GM12878 (cell line): ENCODE measurements at regions of chr6 and their contacts with region 1.

Region 1: GRCh38 chr6:43608310-43608763 is 20.7 kb downstream of the GTPBP2 start:
- DNase-seq: peak; percentile 17
- ATAC-seq: peak; percentile 74
- H3K4me3 ChIP-seq: no peak overlapping the region
- H3K27ac ChIP-seq: no peak overlapping the region
- H3K4me1 ChIP-seq: no peaks in the 10 kb centered on the region
- H3K27me3 ChIP-seq: no peaks in the 10 kb centered on the region
- CTCF ChIP-seq: peak; percentile 74 to 84 (median 78)
- EP300 ChIP-seq: no peak
- POLR2A ChIP-seq: no peak
- RAD21 ChIP-seq: peak; percentile 61

Region 2: DNA sequence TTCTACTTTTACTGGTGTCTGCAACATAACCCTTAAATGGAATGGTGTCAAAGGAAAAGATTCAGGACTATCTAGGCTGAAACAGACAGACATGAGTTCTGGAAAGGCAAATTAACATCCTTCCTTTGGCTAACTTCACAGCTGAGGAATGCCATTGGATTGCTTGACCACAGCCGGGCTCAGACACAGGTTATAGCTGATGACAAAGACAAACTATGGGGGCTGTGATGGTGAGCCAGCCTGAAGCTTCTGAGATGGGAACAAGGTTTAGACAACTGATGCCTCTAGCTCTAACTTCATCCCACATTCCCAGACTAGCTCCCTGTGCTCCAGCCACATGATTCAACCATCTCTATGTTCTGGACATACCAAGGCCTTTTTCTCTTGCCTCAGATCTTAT is 76.1 kb before region 1 on chr6:
- CTCF ChIA-PET with region 1: interaction called, 10 read pairs
- POLR2A ChIA-PET with region 1: interaction called, 5 read pairs
- RAD21 ChIA-PET with region 1: no interaction called
- SMC1A ChIA-PET with region 1: no interaction called
- in situ Hi-C with region 1: no loop called
- intact Hi-C with region 1: no loop called
- DNase-seq: no peak
- ATAC-seq: no peak
- H3K4me3 ChIP-seq: no peak overlapping the region
- H3K27ac ChIP-seq: no peak overlapping the region
- H3K4me1 ChIP-seq: no peaks in the 10 kb centered on the region
- H3K27me3 ChIP-seq: no peaks in the 10 kb centered on the region
- CTCF ChIP-seq: no peak
- EP300 ChIP-seq: no peak
- POLR2A ChIP-seq: no peak
- RAD21 ChIP-seq: no peak

Region 3: GRCh38 chr6:43588194-43588593 is 20.1 kb before region 1 on chr6:
- CTCF ChIA-PET with region 1: interaction called, 15 read pairs
- POLR2A ChIA-PET with region 1: no interaction called
- RAD21 ChIA-PET with region 1: no interaction called
- SMC1A ChIA-PET with region 1: interaction called, 4 read pairs
- in situ Hi-C with region 1: no loop called
- intact Hi-C with region 1: no loop called
- DNase-seq: no peak
- ATAC-seq: no peak
- H3K4me3 ChIP-seq: no peak overlapping the region
- H3K27ac ChIP-seq: no peak overlapping the region
- H3K4me1 ChIP-seq: no peaks in the 10 kb centered on the region
- H3K27me3 ChIP-seq: no peaks in the 10 kb centered on the region
- CTCF ChIP-seq: no peak
- EP300 ChIP-seq: no peak
- POLR2A ChIP-seq: no peak
- RAD21 ChIP-seq: no peak

Region 4: GRCh38 chr6:43593938-43594337 is 14.4 kb before region 1 on chr6:
- CTCF ChIA-PET with region 1: interaction called, 15 read pairs
- POLR2A ChIA-PET with region 1: interaction called, 5 read pairs
- RAD21 ChIA-PET with region 1: interaction called, 3 read pairs
- SMC1A ChIA-PET with region 1: interaction called, 5 read pairs
- in situ Hi-C with region 1: no loop called
- intact Hi-C with region 1: no loop called
- DNase-seq: no peak
- ATAC-seq: no peak
- H3K4me3 ChIP-seq: no peak overlapping the region
- H3K27ac ChIP-seq: no peak overlapping the region
- H3K4me1 ChIP-seq: no peaks in the 10 kb centered on the region
- H3K27me3 ChIP-seq: no peaks in the 10 kb centered on the region
- CTCF ChIP-seq: no peak
- EP300 ChIP-seq: no peak
- POLR2A ChIP-seq: no peak
- RAD21 ChIP-seq: no peak

Region 5: DNA sequence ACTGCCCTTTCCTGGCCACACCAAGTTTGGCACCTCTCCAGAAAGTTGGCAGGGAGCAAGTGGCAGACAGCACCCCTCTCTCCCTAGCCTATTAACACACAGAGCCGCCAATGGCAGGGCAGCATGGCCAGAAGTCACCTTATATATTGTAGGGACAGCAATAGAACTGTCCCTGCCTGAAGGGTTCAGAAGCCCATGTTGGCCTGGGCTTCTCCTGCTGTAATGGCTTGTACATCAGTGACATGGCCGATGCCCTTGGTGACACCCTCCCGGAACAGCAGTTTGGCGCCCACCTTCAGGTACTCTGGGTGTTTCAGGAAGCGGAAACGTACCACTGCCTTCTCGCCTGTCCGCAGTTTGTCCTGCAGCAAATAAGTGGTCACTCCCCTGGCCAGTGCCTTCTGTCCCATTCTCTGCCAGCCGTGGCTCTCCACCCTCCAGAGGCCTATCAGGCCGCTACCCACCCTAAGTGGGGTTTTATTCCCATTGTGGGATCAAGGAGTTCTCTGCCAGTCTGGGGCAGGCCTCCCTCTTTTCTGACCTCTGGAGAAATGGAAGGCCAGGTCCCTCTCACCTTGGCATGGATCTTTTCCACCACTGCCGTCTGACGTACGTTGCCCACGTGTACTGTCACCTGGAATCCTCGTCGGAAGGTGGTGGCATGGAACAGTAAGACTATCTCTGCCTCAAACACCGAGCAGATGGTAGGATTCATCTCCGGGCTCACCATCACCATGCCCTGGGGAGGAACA is 13.3 kb after region 1 on chr6:
- CTCF ChIA-PET with region 1: interaction called, 15 read pairs
- POLR2A ChIA-PET with region 1: no interaction called
- RAD21 ChIA-PET with region 1: no interaction called
- SMC1A ChIA-PET with region 1: interaction called, 5 read pairs
- in situ Hi-C with region 1: no loop called
- intact Hi-C with region 1: no loop called
- DNase-seq: no peak
- ATAC-seq: no peak
- H3K4me3 ChIP-seq: no peak overlapping the region
- H3K27ac ChIP-seq: no peak overlapping the region
- H3K4me1 ChIP-seq: no peaks in the 10 kb centered on the region
- H3K27me3 ChIP-seq: no peaks in the 10 kb centered on the region
- CTCF ChIP-seq: no peak
- EP300 ChIP-seq: no peak
- POLR2A ChIP-seq: 0 out of 2 replicates have a peak, but pooled peaks have one; percentile 3
- RAD21 ChIP-seq: no peak

Region 6: DNA sequence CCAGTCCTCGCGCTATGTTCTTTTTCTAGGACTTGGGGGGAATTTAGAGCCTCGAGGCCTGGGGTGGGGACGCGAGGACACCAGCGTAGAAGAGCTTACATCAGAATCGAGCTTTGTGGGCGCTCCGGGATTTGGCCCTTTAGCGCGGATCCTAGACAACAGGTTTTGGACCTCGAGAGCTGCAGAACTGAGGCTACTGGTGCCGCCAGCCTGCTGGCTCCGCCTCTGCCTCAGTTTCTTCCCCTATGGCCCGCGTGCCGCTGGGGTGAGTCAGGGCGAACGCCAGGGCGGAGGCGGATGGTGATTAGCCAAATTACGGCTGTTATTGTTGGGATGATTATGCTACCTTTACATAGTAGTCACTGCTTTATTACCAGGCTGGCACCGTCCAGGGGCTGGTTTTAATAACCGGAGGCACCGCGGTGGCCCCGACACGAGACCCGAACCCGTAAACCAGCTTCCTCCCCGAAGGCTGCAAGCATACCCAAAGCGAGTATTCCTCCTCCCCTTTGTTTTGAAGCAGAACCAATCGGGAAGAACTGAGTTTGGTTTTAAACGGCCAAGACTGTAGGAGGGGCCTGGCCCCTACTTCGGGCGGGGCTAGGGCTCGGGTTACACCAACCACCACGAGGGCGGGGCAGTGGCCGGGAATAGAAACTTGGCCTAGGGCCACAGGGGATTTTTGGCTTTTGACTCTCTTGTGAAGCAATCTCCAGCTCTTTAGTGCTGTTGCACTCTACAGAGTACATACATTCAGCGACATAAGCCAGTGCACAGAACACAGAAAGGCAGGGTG is 21.4 kb after region 1 on chr6:
- CTCF ChIA-PET with region 1: interaction called, 10 read pairs
- POLR2A ChIA-PET with region 1: interaction called, 3 read pairs
- RAD21 ChIA-PET with region 1: interaction called, 3 read pairs
- SMC1A ChIA-PET with region 1: interaction called, 5 read pairs
- in situ Hi-C with region 1: no loop called
- intact Hi-C with region 1: no loop called
- DNase-seq: peak; percentile 96
- ATAC-seq: peak; percentile 86
- H3K4me3 ChIP-seq: peak overlapping the region; percentile 80
- H3K27ac ChIP-seq: peak overlapping the region; percentile 99
- H3K4me1 ChIP-seq: peaks cover 20% of the 10 kb centered on the region
- H3K27me3 ChIP-seq: no peaks in the 10 kb centered on the region
- CTCF ChIP-seq: no peak
- EP300 ChIP-seq: 0 out of 4 replicates have a peak, but pooled peaks have one; percentile 42 to 48
- POLR2A ChIP-seq: peak; percentile 83
- RAD21 ChIP-seq: no peak